ENCODE measurements at regions of chr12 and their contacts with region 1.

Region 1: GRCh38 chr12:57452937-57453509 is 2.1 kb upstream of the INHBE start:
- DNase-seq: peak; percentile 79
- H3K4me3 ChIP-seq: no peak overlapping the region
- H3K27ac ChIP-seq: no peak overlapping the region
- H3K4me1 ChIP-seq: peaks cover 9 to 16% (median 10%) of the 10 kb centered on the region in 4 donors
- H3K27me3 ChIP-seq: no peaks in the 10 kb centered on the region
- CTCF ChIP-seq: peak; percentile 87 to 92 (median 90)
- EP300 ChIP-seq: no peak
- POLR2A ChIP-seq: no peak

Region 2: DNA sequence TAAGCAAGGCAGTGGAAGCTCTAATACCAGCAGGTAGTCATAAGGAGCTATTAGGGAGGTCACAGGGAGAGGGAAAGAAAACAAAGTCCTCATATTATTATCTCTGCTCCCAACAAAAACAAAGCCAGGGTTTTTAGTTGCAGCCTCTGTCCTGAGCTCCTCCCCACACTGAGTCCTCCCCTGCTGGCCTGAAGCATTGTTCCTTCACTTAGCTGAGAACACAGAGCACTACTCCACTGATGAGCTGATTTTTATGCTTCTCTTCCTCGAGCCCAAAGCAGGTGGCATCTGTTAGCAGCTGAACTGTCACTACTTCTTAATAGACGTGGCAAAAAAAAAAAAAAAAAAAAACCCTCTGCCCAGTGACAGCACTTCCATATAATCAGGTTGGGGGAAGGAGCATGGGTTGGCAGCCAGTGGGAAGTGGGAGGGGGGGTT is 191.6 kb before region 1 on chr12:
- in situ Hi-C with region 1: no loop called
- intact Hi-C with region 1: loop called (anchors 5 kb)
- DNase-seq: no peak
- H3K4me3 ChIP-seq: no peak overlapping the region
- H3K27ac ChIP-seq: no peak overlapping the region
- H3K4me1 ChIP-seq: no peaks in the 10 kb centered on the region
- H3K27me3 ChIP-seq: no peaks in the 10 kb centered on the region
- CTCF ChIP-seq: no peak
- EP300 ChIP-seq: no peak
- POLR2A ChIP-seq: no peak

Region 3: GRCh38 chr12:57309420-57309819 is 143.6 kb before region 1 on chr12:
- in situ Hi-C with region 1: loop called in 1 of 4 experiments (anchors 25 kb)
- intact Hi-C with region 1: loop called (anchors 5 kb)
- DNase-seq: no peak
- H3K4me3 ChIP-seq: no peak overlapping the region
- H3K27ac ChIP-seq: peak overlapping the region in 2 of 4 donors; percentile 29 to 32
- H3K4me1 ChIP-seq: peaks cover 0 to 13% (median 6%) of the 10 kb centered on the region in 4 donors
- H3K27me3 ChIP-seq: no peaks in the 10 kb centered on the region
- CTCF ChIP-seq: no peak
- EP300 ChIP-seq: no peak
- POLR2A ChIP-seq: no peak

Region 4: GRCh38 chr12:57735952-57736740 is 283.1 kb after region 1 on chr12:
- in situ Hi-C with region 1: no loop called
- intact Hi-C with region 1: no loop called
- DNase-seq: no peak
- H3K4me3 ChIP-seq: no peak overlapping the region
- H3K27ac ChIP-seq: no peak overlapping the region
- H3K4me1 ChIP-seq: peaks cover 20 to 36% (median 26%) of the 10 kb centered on the region in 4 donors
- H3K27me3 ChIP-seq: peaks cover 88% of the 10 kb centered on the region
- CTCF ChIP-seq: no peak
- EP300 ChIP-seq: no peak
- POLR2A ChIP-seq: no peak